Panc1 (cell line): ENCODE measurements at regions of chr17 and their contacts with region 1.

Region 1: DNA sequence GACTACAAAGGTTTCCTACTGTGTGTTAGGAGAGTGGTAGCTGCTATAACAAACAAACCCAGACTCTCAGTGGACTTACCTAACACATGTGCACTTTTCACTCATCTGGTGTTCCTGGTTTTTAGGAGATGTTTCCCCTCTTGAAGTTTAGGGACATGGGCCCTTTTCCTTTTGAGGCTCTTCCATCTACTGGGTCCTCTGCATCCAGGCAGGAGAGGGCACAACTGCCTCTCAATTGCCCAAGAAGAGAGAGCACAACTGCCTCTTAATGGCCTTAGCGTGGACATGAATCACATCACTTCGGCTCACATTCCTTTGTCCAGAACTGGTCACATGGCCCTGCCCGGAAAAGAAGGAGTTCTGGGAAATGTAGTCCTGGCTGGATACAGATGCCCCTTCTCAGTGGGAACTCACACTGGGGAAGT is 9.8 kb upstream of the TNRC6C start:
- DNase-seq: no peak
- ATAC-seq: peak; percentile 71; the same call in 1 of the 2 replicates
- H3K4me3 ChIP-seq: no peak overlapping the region
- H3K27ac ChIP-seq: no peak overlapping the region
- H3K4me1 ChIP-seq: no peaks in the 10 kb centered on the region
- H3K27me3 ChIP-seq: peaks cover 34% of the 10 kb centered on the region
- CTCF ChIP-seq: no peak

Region 2: DNA sequence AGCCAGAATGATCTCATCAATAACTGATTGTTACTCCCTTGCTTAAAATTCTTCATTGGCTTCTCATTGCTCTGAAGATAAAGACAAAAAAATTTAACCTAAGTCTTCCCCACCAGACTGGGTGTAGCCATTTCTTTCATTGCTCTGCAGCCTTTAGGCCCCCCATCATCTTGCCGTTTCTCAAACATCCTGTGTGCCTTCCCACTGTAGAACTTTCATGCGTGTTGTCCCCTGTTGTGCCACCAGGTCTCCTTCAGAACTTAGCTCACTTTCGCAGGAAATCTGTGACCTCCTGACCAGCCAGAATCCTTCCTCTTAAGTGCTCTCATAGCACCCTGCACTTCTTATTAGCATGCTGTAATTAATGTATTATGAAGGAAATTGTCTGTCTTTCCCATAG is 41.6 kb after region 1 on chr17:
- CTCF ChIA-PET with region 1: interaction called, 14 read pairs
- POLR2A ChIA-PET with region 1: no interaction called
- in situ Hi-C with region 1: no loop called
- intact Hi-C with region 1: no loop called
- DNase-seq: no peak
- ATAC-seq: no peak
- H3K4me3 ChIP-seq: no peak overlapping the region
- H3K27ac ChIP-seq: no peak overlapping the region
- H3K4me1 ChIP-seq: no peaks in the 10 kb centered on the region
- H3K27me3 ChIP-seq: no peaks in the 10 kb centered on the region; the same call in 1 of the 2 replicates
- CTCF ChIP-seq: no peak